Activated CD8-positive, alpha-beta memory T cell treated with anti-CD3 and anti-CD28 coated beads, Interleukin-2, amount 10 ng/mL, durations not matched to agents 7 days and 5 days (primary cell): ENCODE measurements at regions of chrX and their contacts with region 1.

Region 1: GRCh38 chrX:55907968-55908607 is 190.5 kb downstream of the RRAGB start:
- DNase-seq: peak; percentile 69
- ATAC-seq: peak; percentile 86
- H3K4me3 Mint-ChIP-seq: peak overlapping the region; percentile 87
- H3K27ac Mint-ChIP-seq: peak overlapping the region; percentile 88
- H3K4me1 Mint-ChIP-seq: peaks cover 19% of the 10 kb centered on the region
- H3K27me3 Mint-ChIP-seq: no peaks in the 10 kb centered on the region

Region 2: GRCh38 chrX:55717521-55718497 is 190.3 kb before region 1 on chrX and contains the start of gene RRAGB:
- CTCF ChIA-PET with region 1: interaction called, 17 read pairs
- DNase-seq: peak; percentile 95
- ATAC-seq: peak; percentile 98
- H3K4me3 Mint-ChIP-seq: peak within 1 kb of the TSS; percentile 81
- H3K27ac Mint-ChIP-seq: peak within 1 kb of the TSS; percentile 86
- H3K4me1 Mint-ChIP-seq: peaks cover 18% of the 10 kb centered on the region
- H3K27me3 Mint-ChIP-seq: no peaks in the 10 kb centered on the region
- total RNA-seq, gene RRAGB: 6.1 to 7.7 TPM